ENCODE measurements at regions of chr16 and their contacts with region 1.

Region 1: GRCh38 chr16:75148311-75149195 is at the start of gene ZFP1:
- DNase-seq: peak; percentile 97
- ATAC-seq: peak; percentile 93
- H3K4me3 Mint-ChIP-seq: peak within 1 kb of the TSS; percentile 88
- H3K27ac Mint-ChIP-seq: peak within 1 kb of the TSS; percentile 88
- H3K4me1 Mint-ChIP-seq: peaks cover 32% of the 10 kb centered on the region
- H3K27me3 Mint-ChIP-seq: no peaks in the 10 kb centered on the region
- total RNA-seq, gene ZFP1: 14.8 to 17.3 TPM

Region 2: DNA sequence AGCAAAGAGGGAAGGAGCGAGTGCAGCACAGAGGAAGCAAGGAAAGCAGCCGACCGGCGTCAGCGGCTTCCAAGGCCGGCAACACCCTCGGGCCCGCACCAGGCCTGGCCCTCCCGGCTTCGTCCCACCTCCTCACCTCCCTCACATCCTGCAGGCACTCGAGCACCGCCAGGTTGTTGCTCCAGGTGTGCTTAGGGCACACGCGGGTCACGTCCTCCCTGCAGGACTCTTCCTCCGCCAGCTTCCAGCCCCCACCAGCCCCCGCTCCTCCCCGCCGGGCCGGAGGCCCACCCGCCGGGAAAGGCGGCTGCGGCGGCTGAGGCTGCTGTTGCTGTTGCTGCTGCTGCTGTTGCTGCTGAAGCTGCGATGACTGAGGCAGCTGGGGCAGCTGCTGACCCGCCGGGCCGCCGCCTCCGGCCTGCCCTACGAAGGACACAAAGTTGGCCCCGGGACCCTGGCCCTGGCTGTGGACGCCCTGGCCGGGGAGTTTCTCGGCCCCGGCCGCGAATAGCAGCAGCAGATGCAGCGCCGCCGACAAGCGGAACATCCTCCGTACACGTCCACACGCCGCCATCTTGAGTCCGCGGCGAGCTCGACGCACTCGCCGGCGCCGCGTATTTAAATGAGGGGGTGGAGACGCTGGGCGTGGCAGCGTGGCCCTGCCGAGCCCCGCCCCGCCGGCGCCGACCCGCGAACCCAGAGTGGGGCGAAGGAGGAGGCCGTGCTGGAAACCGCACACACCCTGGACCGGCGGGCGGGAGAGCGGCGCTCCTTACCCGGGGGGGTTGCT is 541.8 kb before region 1 on chr16 and contains the start of gene GLG1:
- CTCF ChIA-PET with region 1: no interaction called
- POLR2A ChIA-PET with region 1: no interaction called
- intact Hi-C with region 1: loop called in 1 of 2 experiments (anchors 1 kb)
- DNase-seq: peak; percentile 95
- ATAC-seq: peak; percentile 87
- H3K4me3 Mint-ChIP-seq: peak within 1 kb of the TSS; percentile 87
- H3K27ac Mint-ChIP-seq: peak within 1 kb of the TSS; percentile 93
- H3K4me1 Mint-ChIP-seq: peaks cover 57% of the 10 kb centered on the region
- H3K27me3 Mint-ChIP-seq: no peaks in the 10 kb centered on the region
- total RNA-seq, gene GLG1: 66.3 to 68.3 TPM

Region 3: DNA sequence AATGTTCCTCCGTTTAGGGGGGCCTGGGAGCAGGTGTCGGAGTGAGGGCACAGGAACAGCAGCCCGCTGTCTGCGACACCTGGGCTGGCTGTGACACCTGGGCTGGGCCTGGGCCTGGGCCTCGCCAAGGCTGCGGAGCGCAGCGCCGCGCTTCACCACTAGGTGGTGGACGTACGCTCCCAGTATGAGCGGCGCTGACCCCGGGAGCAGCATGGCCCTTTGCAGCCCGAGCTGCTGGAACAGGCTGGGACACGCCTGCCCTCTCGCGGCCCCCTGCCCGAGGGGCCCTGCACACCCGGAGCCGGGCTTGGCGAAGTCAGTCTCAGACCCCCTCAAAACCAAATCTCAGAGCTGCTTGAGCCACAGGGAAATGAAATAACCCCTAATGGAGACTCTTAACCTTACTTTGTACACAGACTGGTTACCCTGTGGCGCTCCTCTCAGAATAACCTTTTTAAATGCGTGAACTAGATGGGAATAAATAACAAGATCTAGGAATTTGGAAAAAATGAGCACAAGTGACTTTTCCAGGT is 335.4 kb before region 1 on chr16:
- CTCF ChIA-PET with region 1: no interaction called
- POLR2A ChIA-PET with region 1: no interaction called
- intact Hi-C with region 1: loop called in 1 of 2 experiments (anchors 10 kb)
- DNase-seq: peak; percentile 89
- ATAC-seq: peak; percentile 100
- H3K4me3 Mint-ChIP-seq: no peak overlapping the region
- H3K27ac Mint-ChIP-seq: no peak overlapping the region
- H3K4me1 Mint-ChIP-seq: no peaks in the 10 kb centered on the region
- H3K27me3 Mint-ChIP-seq: no peaks in the 10 kb centered on the region

Region 4: GRCh38 chr16:75099756-75100602 is 48.6 kb before region 1 on chr16:
- CTCF ChIA-PET with region 1: no interaction called
- POLR2A ChIA-PET with region 1: no interaction called
- intact Hi-C with region 1: loop called in 1 of 2 experiments (anchors 1 kb)
- DNase-seq: peak; percentile 68
- ATAC-seq: peak; percentile 45
- H3K4me3 Mint-ChIP-seq: peak overlapping the region; percentile 26
- H3K27ac Mint-ChIP-seq: peak overlapping the region; percentile 88
- H3K4me1 Mint-ChIP-seq: peaks cover 64% of the 10 kb centered on the region
- H3K27me3 Mint-ChIP-seq: no peaks in the 10 kb centered on the region

Region 5: DNA sequence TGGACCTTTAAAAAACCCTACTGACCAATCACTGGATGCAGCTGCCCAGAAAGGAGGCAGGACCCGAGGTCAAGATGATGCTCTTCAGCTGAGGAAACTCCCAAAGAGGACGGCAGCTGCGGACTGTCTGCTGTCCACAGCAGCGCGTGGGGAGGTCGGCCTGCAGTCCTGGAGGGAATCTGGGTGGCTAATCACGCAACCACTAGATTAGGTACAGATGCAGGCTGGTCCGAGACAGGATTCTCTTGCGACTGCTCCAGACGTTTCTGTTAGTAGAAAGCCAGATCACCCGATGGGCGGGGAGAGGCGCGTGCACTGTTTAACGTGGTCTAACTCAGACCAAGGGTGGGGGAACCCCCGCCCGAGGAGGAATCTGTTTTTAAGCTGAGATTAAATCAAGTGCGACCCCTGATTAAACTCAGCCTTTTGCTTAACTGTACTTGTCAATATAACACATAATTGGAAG is 49.6 kb after region 1 on chr16:
- CTCF ChIA-PET with region 1: no interaction called
- POLR2A ChIA-PET with region 1: no interaction called
- intact Hi-C with region 1: no loop called
- DNase-seq: no peak
- ATAC-seq: no peak
- H3K4me3 Mint-ChIP-seq: no peak overlapping the region
- H3K27ac Mint-ChIP-seq: no peak overlapping the region
- H3K4me1 Mint-ChIP-seq: peaks cover 8% of the 10 kb centered on the region
- H3K27me3 Mint-ChIP-seq: peaks cover 10% of the 10 kb centered on the region

Region 6: DNA sequence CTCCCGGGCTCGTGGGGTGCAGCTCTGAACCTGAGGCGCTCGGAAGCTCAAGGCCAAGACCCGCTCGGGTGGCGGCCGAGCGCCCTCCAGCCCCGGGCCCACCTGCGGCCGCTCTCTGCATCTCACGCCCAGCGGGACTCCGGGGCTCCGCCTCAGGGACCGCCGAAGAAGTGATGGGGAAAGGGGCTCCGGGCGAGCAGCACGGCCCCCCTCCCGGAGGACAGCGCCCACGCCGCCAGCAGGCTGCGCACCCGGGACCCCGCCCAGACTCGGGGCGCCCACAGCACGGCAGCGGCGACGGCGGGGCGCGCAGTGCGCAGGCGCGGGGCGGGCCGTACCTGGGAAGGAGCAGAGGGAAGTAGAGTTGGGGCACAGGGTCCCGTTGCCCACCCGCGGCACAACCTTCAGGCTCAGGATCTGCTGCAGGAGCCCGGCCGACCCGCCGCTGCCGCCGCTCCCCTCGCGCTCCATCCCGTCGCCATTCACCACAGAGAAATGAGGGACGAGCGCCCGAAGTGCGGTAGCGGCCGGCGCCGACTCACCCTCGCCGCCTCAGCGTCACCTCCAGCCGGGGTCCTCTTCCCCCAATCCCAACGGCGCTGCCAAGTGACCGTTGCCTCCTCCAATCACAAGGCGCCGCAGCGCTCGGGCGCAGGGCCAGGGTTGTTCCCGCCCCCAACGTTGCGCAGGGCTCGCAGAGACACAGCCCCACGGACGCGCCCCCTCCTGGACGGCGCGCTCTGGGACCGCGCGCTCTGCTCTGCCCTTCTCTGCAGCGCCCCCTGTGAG is 315.8 kb after region 1 on chr16 and contains the start of gene TMEM170A:
- CTCF ChIA-PET with region 1: no interaction called
- POLR2A ChIA-PET with region 1: no interaction called
- intact Hi-C with region 1: loop called in 1 of 2 experiments (anchors 1 kb)
- DNase-seq: peak; percentile 100
- ATAC-seq: peak; percentile 94
- H3K4me3 Mint-ChIP-seq: peak within 1 kb of the TSS; percentile 98
- H3K27ac Mint-ChIP-seq: peak within 1 kb of the TSS; percentile 94
- H3K4me1 Mint-ChIP-seq: peaks cover 45% of the 10 kb centered on the region
- H3K27me3 Mint-ChIP-seq: no peaks in the 10 kb centered on the region
- total RNA-seq, gene TMEM170A: 22.0 to 30.5 TPM

Region 7: DNA sequence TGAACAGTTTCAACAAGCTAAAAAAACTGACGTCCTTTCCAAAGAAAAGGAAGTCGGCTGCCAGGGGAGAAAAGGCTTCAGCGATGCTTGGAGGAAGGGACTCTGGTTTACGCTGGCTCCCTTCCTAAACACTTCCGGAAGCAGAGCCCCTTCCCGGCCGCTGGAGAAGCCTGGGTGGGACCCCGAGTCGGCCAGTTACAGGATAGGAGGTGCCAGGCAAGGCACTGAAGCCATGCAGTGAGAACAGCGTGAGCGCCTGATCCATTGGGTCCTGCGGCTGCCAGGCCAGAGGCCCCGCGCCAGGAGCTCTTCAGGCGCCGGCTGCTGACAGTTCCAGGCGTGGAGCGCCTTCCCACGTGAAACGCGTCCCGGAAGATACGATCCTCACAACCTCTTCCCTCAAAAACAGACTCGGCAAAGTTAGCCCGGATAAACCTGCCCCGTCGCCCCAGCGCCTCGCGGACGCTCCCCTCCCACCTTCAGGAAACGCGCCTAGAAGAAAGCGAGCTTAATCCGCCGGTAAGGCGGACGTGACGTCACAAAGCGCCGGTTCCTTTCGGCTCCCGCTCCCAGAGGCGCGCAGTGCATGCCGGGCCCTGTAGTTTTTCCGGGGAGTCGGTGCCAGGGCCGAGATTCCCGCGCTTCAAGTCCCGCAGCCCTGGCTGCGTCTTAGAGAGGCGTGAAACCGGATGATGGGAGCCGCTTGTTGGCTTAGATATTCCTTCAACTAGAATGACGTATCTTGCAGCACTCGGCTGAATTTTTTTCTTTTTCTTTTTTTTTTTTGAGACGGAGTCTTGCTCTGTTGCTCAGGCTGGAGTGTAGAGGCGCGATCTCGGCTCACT is 474.4 kb after region 1 on chr16 and contains the start of gene ADAT1:
- CTCF ChIA-PET with region 1: no interaction called
- POLR2A ChIA-PET with region 1: no interaction called
- intact Hi-C with region 1: loop called in 1 of 2 experiments (anchors 1 kb)
- DNase-seq: peak; percentile 99
- ATAC-seq: peak; percentile 94
- H3K4me3 Mint-ChIP-seq: peak within 1 kb of the TSS; percentile 93
- H3K27ac Mint-ChIP-seq: peak within 1 kb of the TSS; percentile 95
- H3K4me1 Mint-ChIP-seq: peaks cover 45% of the 10 kb centered on the region
- H3K27me3 Mint-ChIP-seq: no peaks in the 10 kb centered on the region
- total RNA-seq, gene ADAT1: 48.3 to 55.7 TPM

Measured in activated CD4-positive, alpha-beta T cell treated with anti-CD3 and anti-CD28 coated beads for 36 hours (primary cell).